ENCODE measurements at regions of chr9 and their contacts with region 1.

Region 1: GRCh38 chr9:98010445-98010844 is 27.3 kb downstream of the ANP32B start:
- DNase-seq: no peak
- H3K4me3 Mint-ChIP-seq: no peak overlapping the region
- H3K27ac Mint-ChIP-seq: no peak overlapping the region
- H3K4me1 Mint-ChIP-seq: peaks cover 33% of the 10 kb centered on the region
- H3K27me3 Mint-ChIP-seq: no peaks in the 10 kb centered on the region

Region 2: GRCh38 chr9:97997330-97998276 is 12.8 kb before region 1 on chr9:
- CTCF ChIA-PET with region 1: interaction called, 4 read pairs
- POLR2A ChIA-PET with region 1: interaction called, 168 read pairs
- DNase-seq: no peak
- H3K4me3 Mint-ChIP-seq: no peak overlapping the region
- H3K27ac Mint-ChIP-seq: peak overlapping the region; percentile 26
- H3K4me1 Mint-ChIP-seq: peaks cover 48% of the 10 kb centered on the region
- H3K27me3 Mint-ChIP-seq: no peaks in the 10 kb centered on the region

Region 3: GRCh38 chr9:98045234-98046179 is 35.1 kb after region 1 on chr9:
- CTCF ChIA-PET with region 1: no interaction called
- POLR2A ChIA-PET with region 1: no interaction called
- DNase-seq: peak; percentile 44
- H3K4me3 Mint-ChIP-seq: peak overlapping the region; percentile 79
- H3K27ac Mint-ChIP-seq: peak overlapping the region; percentile 82
- H3K4me1 Mint-ChIP-seq: peaks cover 49% of the 10 kb centered on the region
- H3K27me3 Mint-ChIP-seq: no peaks in the 10 kb centered on the region

Measured in activated CD4-positive, alpha-beta memory T cell treated with anti-CD3 and anti-CD28 coated beads, Interleukin-2, amount 10 ng/mL, durations not matched to agents 7 days and 5 days (primary cell).